ENCODE measurements at regions of chr5 and their contacts with region 1.

Region 1: GRCh38 chr5:85628153-85628552 is 989.6 kb upstream of the COX7C start:
- DNase-seq: no peak
- H3K4me3 ChIP-seq: no peak overlapping the region
- H3K27ac ChIP-seq: no peak overlapping the region
- H3K4me1 ChIP-seq: no peaks in the 10 kb centered on the region
- H3K27me3 ChIP-seq: no peaks in the 10 kb centered on the region
- CTCF ChIP-seq: no peak

Region 2: GRCh38 chr5:85533341-85534047 is 94.7 kb before region 1 on chr5:
- CTCF ChIA-PET with region 1: no interaction called
- POLR2A ChIA-PET with region 1: no interaction called
- intact Hi-C with region 1: loop called (anchors 10 kb)
- DNase-seq: no peak
- H3K4me3 ChIP-seq: no peak overlapping the region
- H3K27ac ChIP-seq: no peak overlapping the region
- H3K4me1 ChIP-seq: no peaks in the 10 kb centered on the region
- H3K27me3 ChIP-seq: no peaks in the 10 kb centered on the region
- CTCF ChIP-seq: no peak